ENCODE measurements at regions of chr2 and their contacts with region 1.

Region 1: DNA sequence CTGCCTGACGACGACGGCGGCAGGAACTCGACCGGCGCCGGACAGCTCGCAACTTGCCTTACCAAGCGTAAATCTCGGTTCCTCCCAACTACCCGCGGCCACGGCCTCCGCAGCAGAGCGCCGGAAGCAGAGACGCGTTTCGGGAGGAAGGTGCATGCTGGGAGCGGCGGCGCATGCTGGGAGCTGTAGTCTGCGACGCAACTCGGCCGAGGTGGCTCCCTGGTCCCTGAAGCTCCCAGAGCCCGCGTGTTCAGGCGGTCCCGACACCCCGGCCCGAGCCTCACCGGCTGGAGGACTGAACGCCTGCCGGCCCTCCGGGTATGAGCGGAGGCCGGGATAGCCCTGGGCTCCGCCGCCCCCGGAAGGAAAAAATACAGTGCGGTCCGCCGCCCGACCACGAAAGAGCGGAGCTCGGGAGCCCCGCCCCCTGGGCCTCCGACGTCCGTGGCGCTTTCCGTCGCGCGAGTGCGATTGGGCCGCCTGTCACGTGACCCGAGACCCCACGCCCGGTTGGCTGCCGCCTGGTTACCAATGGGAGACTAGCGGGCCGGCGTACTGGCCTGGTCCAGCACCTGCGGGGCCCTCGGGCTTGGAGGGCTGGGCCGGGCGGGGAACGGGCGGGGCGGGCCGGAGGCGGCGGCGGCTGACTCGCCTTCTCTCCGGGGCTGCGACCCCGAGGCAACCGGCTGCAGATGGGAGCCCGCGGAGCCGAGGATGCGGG is at the start of gene CAPN10:
- H3K4me3 ChIP-seq: peak within 1 kb of the TSS; percentile 97
- H3K27ac ChIP-seq: peak within 1 kb of the TSS; percentile 78
- H3K4me1 ChIP-seq: peaks cover 13% of the 10 kb centered on the region
- CTCF ChIP-seq: peak; percentile 14; the same call in 1 of the 2 replicates

Region 2: GRCh38 chr2:240560480-240561326 is 25.7 kb before region 1 on chr2:
- CTCF ChIA-PET with region 1: interaction called, 34 read pairs
- POLR2A ChIA-PET with region 1: interaction called, 53 read pairs
- H3K4me3 ChIP-seq: peak overlapping the region; percentile 64
- H3K27ac ChIP-seq: peak overlapping the region; percentile 90
- H3K4me1 ChIP-seq: peaks cover 5% of the 10 kb centered on the region
- CTCF ChIP-seq: peak; percentile 49; the same call in 1 of the 2 replicates

Region 3: GRCh38 chr2:240602266-240603055 is 16.1 kb after region 1 on chr2:
- CTCF ChIA-PET with region 1: interaction called, 3 read pairs
- POLR2A ChIA-PET with region 1: interaction called, 14 read pairs
- H3K4me3 ChIP-seq: no peak overlapping the region
- H3K27ac ChIP-seq: no peak overlapping the region
- H3K4me1 ChIP-seq: no peaks in the 10 kb centered on the region; the same call in 1 of the 2 replicates
- CTCF ChIP-seq: no peak

Region 4: DNA sequence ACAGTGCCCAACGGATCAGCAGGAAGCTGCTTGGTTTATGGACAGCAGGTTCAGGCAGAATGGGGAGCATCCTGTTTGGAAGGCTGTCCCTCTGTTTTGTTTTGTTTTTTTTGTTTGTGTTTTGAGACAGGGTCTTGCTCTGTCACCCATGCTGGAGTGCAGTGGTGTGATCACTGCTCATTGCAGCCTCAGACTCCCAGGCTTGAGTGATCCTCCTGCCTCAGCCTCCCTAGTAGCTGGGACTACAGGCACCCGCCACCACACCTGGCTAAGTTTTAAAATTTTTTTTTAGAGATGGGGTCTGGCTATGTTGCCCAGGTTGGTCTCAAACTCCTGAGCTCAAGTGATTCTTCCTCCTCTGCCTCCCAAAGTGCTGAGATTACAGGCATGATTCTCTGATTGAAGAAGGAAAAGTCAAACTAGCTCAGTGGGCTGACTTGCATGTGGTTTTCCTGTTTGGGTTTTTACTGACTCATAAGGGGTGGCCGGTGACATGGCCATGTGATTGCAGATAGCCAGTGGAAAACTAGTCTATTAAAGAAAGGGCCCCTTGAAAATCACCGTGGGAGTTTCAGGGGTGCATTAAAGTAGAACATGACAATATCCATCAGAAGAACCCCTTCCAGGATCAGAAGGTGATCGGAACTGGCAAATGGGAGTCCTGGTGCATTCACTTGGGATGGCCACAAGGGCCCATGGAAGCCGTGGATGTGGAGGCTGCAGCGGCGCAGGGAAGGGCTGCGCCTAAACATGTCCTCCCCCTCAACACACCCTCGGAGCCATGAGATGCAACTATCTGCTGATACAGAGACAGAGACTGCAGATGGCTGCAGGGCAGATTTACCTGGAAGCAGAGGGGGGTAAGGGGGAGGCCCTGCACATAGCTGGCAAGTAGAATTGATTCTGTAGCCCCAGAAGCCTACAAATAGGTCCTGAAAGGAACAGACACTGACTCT is 69.9 kb after region 1 on chr2:
- CTCF ChIA-PET with region 1: no interaction called
- POLR2A ChIA-PET with region 1: no interaction called
- H3K4me3 ChIP-seq: no peak overlapping the region
- H3K27ac ChIP-seq: no peak overlapping the region
- H3K4me1 ChIP-seq: no peaks in the 10 kb centered on the region
- CTCF ChIP-seq: no peak

Measured in HEK293 (cell line).